ENCODE measurements at regions of chr3 and their contacts with region 1.

Region 1: DNA sequence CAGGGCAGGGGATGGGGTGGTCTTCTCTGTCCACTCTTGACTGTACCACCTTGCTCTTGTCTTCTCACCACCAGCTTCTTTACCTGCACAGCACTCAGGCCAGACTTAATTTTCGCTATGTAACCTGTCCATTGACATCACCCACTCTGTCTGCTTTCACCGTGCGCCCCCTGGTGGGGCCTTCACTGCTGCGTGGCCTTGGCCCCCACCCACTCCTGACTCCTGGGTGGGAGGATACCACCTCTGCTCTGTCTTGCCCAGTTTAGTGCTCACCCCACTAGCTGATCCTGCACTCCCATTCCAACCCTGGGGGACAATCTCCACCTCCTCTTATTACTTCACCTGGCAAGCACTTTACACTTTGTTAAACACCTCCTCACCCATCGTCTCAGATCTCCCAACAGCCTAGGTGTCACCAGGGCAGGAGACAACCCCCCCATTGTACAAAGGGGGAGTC is 17.7 kb downstream of the PTH1R start:
- DNase-seq: peak; percentile 90
- ATAC-seq: peak; percentile 71

Region 2: DNA sequence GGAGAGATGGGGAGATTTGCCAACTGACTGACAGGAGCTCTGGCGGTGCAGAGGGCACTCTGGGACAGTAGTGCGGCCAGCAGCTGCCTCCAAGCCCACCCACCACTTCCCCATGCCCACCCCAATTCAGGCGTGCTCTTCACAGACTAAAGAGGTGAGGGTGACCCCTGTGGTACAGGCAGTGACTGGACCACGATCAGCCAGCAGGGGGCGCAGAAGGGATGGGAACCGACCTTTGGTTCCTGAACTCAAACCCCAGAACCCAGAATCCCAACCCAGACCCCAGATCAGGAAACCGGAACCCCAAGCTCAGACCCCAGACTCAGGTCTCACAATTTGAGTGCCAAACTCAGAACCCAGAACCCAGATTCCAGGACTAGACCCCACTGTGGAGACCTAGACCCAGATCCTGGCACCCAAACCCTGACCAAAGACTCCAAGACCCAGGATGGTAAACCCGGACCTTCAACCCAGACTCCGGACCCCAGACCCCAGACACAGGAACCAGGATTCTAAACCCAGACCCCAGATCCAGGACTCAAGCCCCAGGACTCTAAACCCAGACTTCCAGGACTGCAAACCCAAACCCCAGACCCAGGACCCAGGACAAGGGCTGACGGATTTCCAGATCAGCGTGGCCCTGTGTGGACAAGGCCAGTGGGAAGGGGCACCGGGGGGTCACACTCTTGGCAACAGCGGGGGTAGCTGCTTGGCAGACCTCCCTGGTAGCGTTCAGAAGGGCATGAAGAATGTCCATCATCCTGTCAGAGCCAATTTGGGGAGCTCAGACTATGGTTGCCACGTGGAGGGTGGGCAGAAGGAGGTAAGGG is 28.3 kb before region 1 on chr3:
- intact Hi-C with region 1: loop called (anchors 2 kb)
- DNase-seq: peak; percentile 94
- ATAC-seq: peak; percentile 48